Activated CD4-positive, alpha-beta T cell treated with anti-CD3 and anti-CD28 coated beads for 36 hours (primary cell): ENCODE measurements at regions of chr16 and their contacts with region 1.

Region 1: DNA sequence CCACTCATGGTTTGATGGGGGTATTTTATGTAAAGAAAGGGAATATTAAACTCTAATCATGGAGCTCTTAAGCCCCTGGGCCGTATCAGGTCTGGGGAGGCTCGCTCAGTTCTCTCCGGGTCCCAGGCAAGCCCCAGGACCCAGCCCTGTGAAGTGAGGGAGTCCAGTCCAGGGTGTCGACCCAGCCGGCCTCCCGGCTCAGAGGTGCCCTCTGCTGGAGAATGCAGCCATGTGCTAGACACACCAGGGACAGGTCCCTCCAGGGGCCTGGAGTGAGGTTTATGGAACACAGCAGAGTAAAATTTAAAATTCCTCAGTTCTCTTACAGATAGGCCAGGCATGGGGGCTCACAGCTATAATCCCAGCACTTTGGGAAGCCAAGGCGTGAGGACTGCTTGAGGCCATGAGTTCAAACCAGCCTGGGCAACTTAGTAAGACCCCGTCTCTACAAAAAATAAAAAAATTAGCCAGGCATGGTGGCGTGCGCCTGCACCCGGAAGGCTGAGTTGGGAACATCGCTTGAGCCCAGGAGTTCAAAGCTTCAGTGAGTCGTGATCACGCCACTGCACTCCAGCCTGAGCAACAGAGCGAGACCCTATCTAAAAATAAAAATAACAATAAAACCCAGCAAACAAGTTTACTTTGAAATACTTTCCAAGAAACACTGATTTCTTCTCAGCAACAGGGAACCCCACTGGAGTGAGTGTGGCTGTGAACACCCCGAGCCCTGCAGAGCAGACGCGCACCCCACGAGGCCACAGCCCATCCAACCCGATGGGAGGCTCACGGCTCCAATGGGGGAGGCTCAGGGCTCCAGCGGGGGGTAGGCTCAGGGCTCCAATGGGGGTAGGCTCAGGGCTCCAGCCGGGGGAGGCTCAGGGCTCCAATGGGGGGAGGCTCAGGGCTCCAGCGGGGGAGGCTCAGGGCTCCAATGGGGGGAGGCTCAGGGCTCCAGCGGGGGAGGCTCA is 72.2 kb downstream of the ZNF778 start:
- DNase-seq: peak; percentile 86
- ATAC-seq: peak; percentile 97
- H3K4me3 Mint-ChIP-seq: no peak overlapping the region
- H3K27ac Mint-ChIP-seq: no peak overlapping the region
- H3K4me1 Mint-ChIP-seq: peaks cover 3% of the 10 kb centered on the region
- H3K27me3 Mint-ChIP-seq: no peaks in the 10 kb centered on the region

Region 2: DNA sequence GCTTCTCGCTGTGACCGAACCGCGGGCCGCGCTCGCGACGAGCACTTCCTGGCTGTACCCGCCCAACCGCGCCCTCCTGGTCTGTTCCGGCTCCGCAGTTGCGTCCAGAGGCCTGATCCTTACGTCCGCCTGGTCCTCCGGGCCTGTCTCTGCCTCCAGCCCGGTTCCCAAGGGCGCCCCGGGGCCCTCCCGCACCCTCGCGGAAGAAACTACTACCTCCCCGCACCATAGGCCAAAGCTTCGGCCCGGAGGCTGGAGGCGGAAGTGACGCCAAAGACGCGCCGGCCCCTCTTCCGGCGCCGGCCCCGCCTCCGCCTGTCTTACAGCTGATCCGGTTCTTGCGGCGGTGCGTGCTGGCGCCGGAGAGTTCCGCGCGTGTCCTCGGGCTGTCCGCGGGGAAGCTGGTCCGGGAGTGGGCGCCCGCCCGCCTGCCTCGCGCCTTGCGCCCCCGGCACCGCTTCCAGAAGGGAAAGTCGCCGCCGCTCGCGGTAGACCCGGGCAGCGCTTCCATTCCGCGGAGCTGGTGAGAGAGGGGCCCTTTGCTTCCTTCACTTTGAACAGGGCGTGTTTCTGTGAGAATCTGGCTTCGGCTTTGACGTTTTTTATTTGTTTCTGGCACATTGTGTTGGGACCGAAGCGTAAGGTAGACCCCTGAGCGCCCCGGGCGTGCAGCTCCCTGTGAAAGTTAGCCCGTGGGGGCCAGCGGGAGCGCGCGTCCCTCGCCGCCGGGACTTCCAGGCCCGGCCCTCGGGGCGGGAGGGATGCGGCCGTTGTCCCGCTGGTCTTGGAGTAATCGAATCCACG is 72.1 kb before region 1 on chr16 and contains the start of gene ZNF778:
- CTCF ChIA-PET with region 1: no interaction called
- POLR2A ChIA-PET with region 1: no interaction called
- intact Hi-C with region 1: no loop called
- DNase-seq: peak; percentile 89
- ATAC-seq: peak; percentile 81
- H3K4me3 Mint-ChIP-seq: peak within 1 kb of the TSS; percentile 83
- H3K27ac Mint-ChIP-seq: peak within 1 kb of the TSS; percentile 93
- H3K4me1 Mint-ChIP-seq: peaks cover 19% of the 10 kb centered on the region
- H3K27me3 Mint-ChIP-seq: no peaks in the 10 kb centered on the region
- total RNA-seq, gene ZNF778: 4.7 to 5.0 TPM

Region 3: DNA sequence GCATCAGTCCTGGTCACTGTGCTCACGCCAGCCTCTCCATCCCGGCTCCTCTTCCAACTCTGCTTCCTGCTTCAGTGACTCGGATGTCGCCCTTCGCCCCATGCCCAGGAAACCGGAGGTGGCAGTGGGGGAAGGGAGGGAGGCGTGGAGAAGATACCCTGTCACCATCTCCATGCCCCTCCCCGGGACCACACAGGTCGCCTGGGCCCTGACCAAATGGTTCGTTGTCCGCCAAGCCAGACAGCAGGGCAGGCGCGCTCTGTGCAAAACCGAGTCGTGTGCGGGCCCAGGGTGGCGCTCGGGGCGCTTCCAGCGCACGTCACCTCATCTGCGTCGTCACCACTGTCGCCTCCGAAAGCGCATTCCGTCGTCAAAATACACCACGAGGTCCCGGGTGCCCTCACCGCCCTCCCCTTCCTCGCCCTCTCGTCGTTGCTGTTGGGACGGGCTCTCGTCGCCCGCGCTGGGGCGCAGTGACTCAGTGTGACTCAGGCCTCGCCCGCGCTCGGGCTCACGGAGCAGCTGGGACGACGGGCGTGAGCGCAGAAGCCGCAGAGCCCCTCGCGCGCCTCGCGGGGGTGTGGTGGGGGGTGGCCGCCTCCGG is 33.0 kb before region 1 on chr16:
- CTCF ChIA-PET with region 1: no interaction called
- POLR2A ChIA-PET with region 1: no interaction called
- intact Hi-C with region 1: loop called in 1 of 2 experiments (anchors 1 kb)
- DNase-seq: peak; percentile 93
- ATAC-seq: peak; percentile 100
- H3K4me3 Mint-ChIP-seq: peak overlapping the region; percentile 62
- H3K27ac Mint-ChIP-seq: peak overlapping the region; percentile 65
- H3K4me1 Mint-ChIP-seq: peaks cover 19% of the 10 kb centered on the region
- H3K27me3 Mint-ChIP-seq: peaks cover 16% of the 10 kb centered on the region

Region 4: DNA sequence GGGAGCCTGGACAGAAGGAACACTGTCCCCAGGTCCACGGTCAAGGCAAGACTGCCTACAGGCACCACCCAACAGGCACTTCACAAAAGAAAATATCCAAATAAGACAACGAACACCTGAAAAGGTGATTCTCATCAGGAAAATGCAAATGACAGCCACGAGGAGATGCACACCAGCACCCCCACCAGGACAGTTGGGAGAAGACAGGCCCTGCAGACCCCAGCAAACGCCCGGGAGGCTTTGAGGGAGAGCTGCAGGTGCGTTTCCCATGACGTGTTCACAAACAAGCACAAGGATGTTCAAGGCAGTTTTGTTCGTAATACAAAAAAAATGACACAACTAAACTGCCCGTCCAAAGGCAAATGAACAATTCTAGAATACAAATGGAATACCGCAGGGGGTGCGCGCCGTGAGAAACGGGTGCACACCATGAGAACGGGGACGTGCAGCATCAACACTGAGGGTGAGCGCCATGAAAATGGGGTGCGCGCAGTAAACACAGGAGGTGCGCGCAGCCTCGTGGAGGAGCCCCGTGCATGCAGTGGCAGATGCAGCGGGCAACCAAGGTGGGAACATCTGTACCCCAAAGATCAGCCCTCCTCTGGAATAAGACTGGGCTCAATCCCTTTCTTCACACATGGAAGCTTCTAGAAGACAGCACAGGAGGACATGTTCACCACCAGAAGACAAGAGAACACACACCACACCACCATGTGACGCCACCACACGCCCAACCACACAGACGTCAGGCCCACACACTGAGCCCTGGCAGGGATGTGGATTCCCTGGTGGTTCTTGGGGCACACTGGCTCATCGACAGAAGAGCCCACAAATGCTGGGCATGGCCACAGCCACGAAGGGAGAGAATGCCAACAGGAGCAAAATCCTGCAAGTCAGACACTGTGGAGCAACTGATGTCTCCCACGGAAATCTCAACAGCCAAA is 18.9 kb after region 1 on chr16:
- CTCF ChIA-PET with region 1: interaction called, 11 read pairs
- POLR2A ChIA-PET with region 1: no interaction called
- intact Hi-C with region 1: no loop called
- DNase-seq: peak; percentile 62
- ATAC-seq: peak; percentile 57
- H3K4me3 Mint-ChIP-seq: no peak overlapping the region
- H3K27ac Mint-ChIP-seq: peak overlapping the region; percentile 69
- H3K4me1 Mint-ChIP-seq: peaks cover 55% of the 10 kb centered on the region
- H3K27me3 Mint-ChIP-seq: no peaks in the 10 kb centered on the region